CD4-positive, alpha-beta memory T cell (primary cell): ENCODE measurements at regions of chr3 and their contacts with region 1.

Region 1: DNA sequence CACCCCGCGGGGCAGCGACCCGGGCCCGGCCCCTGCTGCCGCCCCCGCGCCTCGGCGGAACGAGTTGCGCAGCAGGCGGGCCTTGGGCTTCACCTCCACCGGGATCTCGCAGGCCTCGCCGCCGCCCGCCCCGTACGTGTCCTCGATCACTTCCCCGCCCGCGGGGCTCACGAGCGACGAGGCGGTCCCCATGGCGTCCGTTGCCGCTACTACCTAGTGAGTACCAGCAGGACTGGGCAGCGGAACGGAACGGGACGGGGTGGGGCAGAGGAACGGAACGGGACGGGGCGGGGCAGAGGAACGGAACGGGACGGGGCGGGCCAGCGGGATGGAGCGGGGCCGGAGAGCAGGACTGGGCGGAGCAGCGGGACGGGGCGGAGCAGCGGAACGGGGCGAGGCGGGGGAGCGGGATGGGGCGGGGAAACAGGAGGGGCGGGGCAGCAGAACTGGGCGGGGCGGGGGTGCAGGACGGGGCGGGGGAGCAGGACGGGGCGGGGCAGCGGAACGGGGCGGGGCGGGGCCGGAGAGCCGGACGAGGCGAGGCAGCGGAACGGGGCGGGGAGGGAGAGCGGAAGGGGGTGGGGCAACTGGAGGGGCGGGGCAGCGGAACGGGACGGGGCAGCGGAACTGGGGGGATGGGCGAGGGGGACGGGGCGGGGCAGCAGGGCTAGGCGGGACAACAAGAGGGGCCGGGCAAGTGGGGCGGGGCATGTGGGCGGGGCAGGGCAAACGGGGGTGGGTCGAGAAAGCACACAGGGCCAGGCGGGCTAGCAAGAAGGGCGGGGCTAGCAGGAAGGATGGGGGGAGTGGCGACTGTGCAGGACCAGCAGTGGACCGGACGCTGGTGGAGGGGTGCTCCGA is at the start of gene NPHP3:
- DNase-seq: peak; percentile 87 to 95 (median 91)
- H3K4me3 ChIP-seq: peak within 1 kb of the TSS; percentile 44 to 81
- H3K4me3 Mint-ChIP-seq: peak within 1 kb of the TSS; percentile 90 to 96 (median 92)
- H3K27ac ChIP-seq: peak within 1 kb of the TSS; percentile 80
- H3K27ac Mint-ChIP-seq: peak within 1 kb of the TSS; percentile 79 to 94 (median 91)
- H3K4me1 ChIP-seq: peaks cover 30% of the 10 kb centered on the region
- H3K4me1 Mint-ChIP-seq: peaks cover 29 to 49% (median 41%) of the 10 kb centered on the region in 4 donors
- H3K27me3 ChIP-seq: no peaks in the 10 kb centered on the region
- H3K27me3 Mint-ChIP-seq: peaks cover 0 to 1% of the 10 kb centered on the region in 2 donors
- total RNA-seq, gene NPHP3: 68.0 to 72.9 TPM

Region 2: DNA sequence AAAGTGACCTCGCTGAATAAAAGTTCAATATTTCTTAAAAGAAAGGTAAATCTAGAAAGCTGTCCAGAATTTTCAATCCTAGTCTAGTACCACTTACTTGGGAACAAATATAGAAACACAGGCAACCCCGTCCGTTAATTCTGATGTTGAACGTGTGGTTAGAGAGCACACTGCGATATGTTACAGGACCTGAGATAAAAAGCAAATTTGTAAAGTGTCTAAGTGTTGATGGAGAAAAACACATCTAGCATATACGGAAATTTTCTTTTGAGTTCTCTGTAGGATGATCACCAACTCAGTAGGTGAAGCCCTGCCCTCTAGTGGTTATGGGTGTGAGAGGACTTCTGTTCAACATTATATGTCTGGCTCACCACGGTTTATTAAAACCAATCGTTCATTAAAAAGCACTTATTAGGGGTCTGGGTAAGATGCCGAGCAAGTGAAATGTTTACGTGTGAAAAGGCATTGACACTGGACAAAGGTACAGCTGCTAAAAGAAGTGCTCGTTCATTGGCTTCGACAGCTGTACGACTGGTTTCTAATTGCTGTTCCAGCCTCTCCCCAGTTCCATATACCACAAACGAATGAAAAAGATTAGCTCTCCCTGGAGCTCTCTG is 1829.5 kb before region 1 on chr3:
- CTCF ChIA-PET with region 1: no interaction called
- POLR2A ChIA-PET with region 1: no interaction called
- intact Hi-C with region 1: loop called (anchors 5 kb)
- DNase-seq: peak; percentile 75 to 80 (median 76)
- H3K4me3 ChIP-seq: peak overlapping the region; percentile 79 to 99
- H3K4me3 Mint-ChIP-seq: peak overlapping the region; percentile 95 to 99 (median 98)
- H3K27ac ChIP-seq: peak overlapping the region; percentile 99
- H3K27ac Mint-ChIP-seq: peak overlapping the region; percentile 99 to 100 (median 100)
- H3K4me1 ChIP-seq: peaks cover 29% of the 10 kb centered on the region
- H3K4me1 Mint-ChIP-seq: peaks cover 27 to 47% (median 32%) of the 10 kb centered on the region in 4 donors
- H3K27me3 ChIP-seq: no peaks in the 10 kb centered on the region
- H3K27me3 Mint-ChIP-seq: peaks cover 0 to 1% of the 10 kb centered on the region in 2 donors

Region 3: DNA sequence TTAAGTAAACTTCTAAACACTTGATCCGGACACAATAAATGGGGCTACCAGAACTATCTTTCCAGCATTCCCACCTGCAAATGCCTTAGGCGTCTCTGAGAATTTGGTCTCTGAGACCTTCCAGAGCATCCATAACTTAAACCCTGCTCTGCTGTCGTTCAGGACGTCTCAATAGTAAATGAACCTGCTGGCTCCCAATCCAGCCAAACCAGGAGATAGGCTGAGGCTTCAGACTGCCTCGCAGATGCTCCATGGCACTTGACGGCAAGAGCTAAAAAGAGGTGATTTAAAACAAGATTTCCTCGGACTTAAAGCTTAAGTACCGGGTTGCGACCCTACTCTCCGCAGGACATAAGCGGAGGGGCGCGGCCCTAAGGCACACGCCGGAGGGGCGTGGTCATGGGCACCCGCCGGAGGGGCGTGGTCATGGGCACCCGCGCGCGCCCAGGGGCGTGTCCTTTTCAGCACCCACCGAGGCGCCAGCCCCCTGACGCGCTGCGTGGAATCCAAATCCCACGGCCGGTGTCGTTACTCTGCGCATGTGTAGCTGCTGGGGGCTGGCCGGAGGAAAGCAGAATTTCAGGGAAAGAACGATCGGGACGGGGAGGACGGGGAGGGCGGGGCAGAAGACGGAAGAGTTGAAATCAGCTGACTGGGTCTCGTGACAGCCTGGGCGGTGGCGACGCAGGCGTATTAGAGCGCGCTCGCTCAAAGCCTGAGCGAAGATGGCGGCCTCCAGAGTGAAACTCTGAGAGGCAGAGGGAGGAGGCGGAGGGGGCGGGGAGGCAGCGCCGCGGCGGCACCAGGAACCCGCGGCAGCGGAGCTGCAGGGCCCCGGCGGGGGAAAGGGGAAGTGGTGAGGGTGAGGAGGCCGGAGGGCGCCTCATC is 305.3 kb before region 1 on chr3 and contains the start of gene DNAJC13:
- CTCF ChIA-PET with region 1: no interaction called
- POLR2A ChIA-PET with region 1: interaction called, 6 read pairs
- intact Hi-C with region 1: loop called (anchors 1 kb)
- DNase-seq: peak; percentile 91 to 95 (median 93)
- H3K4me3 ChIP-seq: peak within 1 kb of the TSS; percentile 84 to 89
- H3K4me3 Mint-ChIP-seq: peak within 1 kb of the TSS; percentile 96 to 100 (median 99)
- H3K27ac ChIP-seq: peak within 1 kb of the TSS; percentile 82
- H3K27ac Mint-ChIP-seq: peak within 1 kb of the TSS; percentile 95 to 99 (median 98)
- H3K4me1 ChIP-seq: peaks cover 23% of the 10 kb centered on the region
- H3K4me1 Mint-ChIP-seq: peaks cover 20 to 38% (median 26%) of the 10 kb centered on the region in 4 donors
- H3K27me3 ChIP-seq: no peaks in the 10 kb centered on the region
- H3K27me3 Mint-ChIP-seq: no peaks in the 10 kb centered on the region
- total RNA-seq, gene DNAJC13: 43.1 to 43.5 TPM

Region 4: GRCh38 chr3:133426721-133427120 is 704.3 kb after region 1 on chr3:
- CTCF ChIA-PET with region 1: interaction called, 145 read pairs
- POLR2A ChIA-PET with region 1: interaction called, 5 read pairs
- intact Hi-C with region 1: loop called (anchors 1 kb)
- DNase-seq: no peak
- H3K4me3 ChIP-seq: no peak overlapping the region
- H3K4me3 Mint-ChIP-seq: no peak overlapping the region
- H3K27ac ChIP-seq: no peak overlapping the region
- H3K27ac Mint-ChIP-seq: no peak overlapping the region
- H3K4me1 ChIP-seq: peaks cover 4% of the 10 kb centered on the region
- H3K4me1 Mint-ChIP-seq: peaks cover 0 to 9% (median 3%) of the 10 kb centered on the region in 4 donors
- H3K27me3 ChIP-seq: no peaks in the 10 kb centered on the region
- H3K27me3 Mint-ChIP-seq: peaks cover 2 to 10% of the 10 kb centered on the region in 2 donors

Region 5: GRCh38 chr3:133573054-133573628 is 850.7 kb after region 1 on chr3:
- CTCF ChIA-PET with region 1: interaction called, 10 read pairs
- POLR2A ChIA-PET with region 1: interaction called, 24 read pairs
- intact Hi-C with region 1: loop called (anchors 1 kb)
- DNase-seq: peak; percentile 100
- H3K4me3 ChIP-seq: peak overlapping the region; percentile 27 to 59
- H3K4me3 Mint-ChIP-seq: peak overlapping the region; percentile 79 to 92 (median 87)
- H3K27ac ChIP-seq: peak overlapping the region; percentile 90
- H3K27ac Mint-ChIP-seq: peak overlapping the region; percentile 97 to 99 (median 98)
- H3K4me1 ChIP-seq: peaks cover 46% of the 10 kb centered on the region
- H3K4me1 Mint-ChIP-seq: peaks cover 37 to 58% (median 47%) of the 10 kb centered on the region in 4 donors
- H3K27me3 ChIP-seq: no peaks in the 10 kb centered on the region
- H3K27me3 Mint-ChIP-seq: no peaks in the 10 kb centered on the region

Region 6: DNA sequence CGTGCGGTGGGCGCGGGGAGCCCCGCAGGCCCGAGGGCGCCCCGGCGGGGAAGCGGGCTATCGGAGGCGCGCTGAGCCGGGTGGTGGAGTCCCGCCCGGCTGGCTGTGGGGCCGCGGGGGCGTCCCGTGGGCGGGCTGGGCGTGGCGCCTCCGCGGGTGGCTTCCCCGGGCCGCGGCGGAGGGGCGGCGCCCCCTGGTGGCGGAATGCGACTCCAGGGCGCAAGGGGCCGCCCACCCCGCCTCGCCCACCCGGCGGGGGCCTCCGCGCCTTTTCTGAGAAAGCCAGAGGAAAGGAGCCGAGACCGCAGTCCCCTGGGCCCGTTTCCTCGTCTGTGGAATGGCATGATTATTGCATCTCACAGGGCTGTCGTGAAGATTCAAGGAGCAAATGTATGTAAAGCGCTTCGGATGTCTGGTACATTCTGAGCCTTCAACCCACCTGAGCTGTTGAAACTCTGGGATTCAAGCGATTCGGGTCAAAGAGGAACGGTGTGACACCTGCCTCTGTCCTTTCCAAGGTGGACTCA is 1205.2 kb after region 1 on chr3:
- CTCF ChIA-PET with region 1: interaction called, 25 read pairs
- POLR2A ChIA-PET with region 1: no interaction called
- intact Hi-C with region 1: loop called (anchors 1 kb)
- DNase-seq: peak; percentile 63 to 76 (median 75)
- H3K4me3 ChIP-seq: peak overlapping the region in 1 of 2 donors; percentile 36
- H3K4me3 Mint-ChIP-seq: peak overlapping the region; percentile 67 to 84 (median 79)
- H3K27ac ChIP-seq: no peak overlapping the region
- H3K27ac Mint-ChIP-seq: peak overlapping the region in 3 of 7 donors; percentile 11 to 74 (median 61)
- H3K4me1 ChIP-seq: peaks cover 12% of the 10 kb centered on the region
- H3K4me1 Mint-ChIP-seq: peaks cover 5 to 15% (median 9%) of the 10 kb centered on the region in 4 donors
- H3K27me3 ChIP-seq: no peaks in the 10 kb centered on the region
- H3K27me3 Mint-ChIP-seq: peaks cover 8% of the 10 kb centered on the region in 2 donors